ENCODE measurements at regions of chr2 and their contacts with region 1.

Region 1: GRCh38 chr2:136423516-136423996 is 305.6 kb upstream of the CXCR4 start:
- DNase-seq: peak in 1 of 2 donors; percentile 72
- H3K4me3 ChIP-seq: peak overlapping the region; percentile 45 to 60
- H3K27ac ChIP-seq: no peak overlapping the region
- H3K4me1 ChIP-seq: peaks cover 0 to 2% of the 10 kb centered on the region in 2 donors
- H3K27me3 ChIP-seq: no peaks in the 10 kb centered on the region
- CTCF ChIP-seq: peak; percentile 84 to 96 (median 86)

Region 2: DNA sequence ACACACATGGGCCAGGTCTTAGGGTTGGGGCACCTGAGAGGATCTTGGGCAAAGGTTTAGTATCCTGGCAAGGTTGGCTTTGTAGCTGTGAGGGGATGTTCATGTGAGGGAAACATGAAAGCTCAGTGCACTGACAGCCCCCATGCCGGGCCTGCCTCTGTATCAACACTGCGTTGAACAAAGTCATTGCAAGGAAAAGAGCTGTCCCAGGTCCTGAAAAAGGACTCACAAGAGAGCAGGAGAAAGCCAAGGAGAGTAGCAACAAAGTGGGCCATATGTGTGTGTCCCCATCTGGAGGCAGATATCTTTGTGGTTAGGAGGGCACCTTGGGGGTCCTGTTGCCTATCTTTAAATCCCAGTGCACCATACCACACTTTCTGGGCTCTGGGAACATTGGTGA is 104.0 kb after region 1 on chr2:
- intact Hi-C with region 1: no loop called
- DNase-seq: no peak
- H3K4me3 ChIP-seq: no peak overlapping the region
- H3K27ac ChIP-seq: no peak overlapping the region
- H3K4me1 ChIP-seq: no peaks in the 10 kb centered on the region
- H3K27me3 ChIP-seq: no peaks in the 10 kb centered on the region
- CTCF ChIP-seq: no peak

Region 3: DNA sequence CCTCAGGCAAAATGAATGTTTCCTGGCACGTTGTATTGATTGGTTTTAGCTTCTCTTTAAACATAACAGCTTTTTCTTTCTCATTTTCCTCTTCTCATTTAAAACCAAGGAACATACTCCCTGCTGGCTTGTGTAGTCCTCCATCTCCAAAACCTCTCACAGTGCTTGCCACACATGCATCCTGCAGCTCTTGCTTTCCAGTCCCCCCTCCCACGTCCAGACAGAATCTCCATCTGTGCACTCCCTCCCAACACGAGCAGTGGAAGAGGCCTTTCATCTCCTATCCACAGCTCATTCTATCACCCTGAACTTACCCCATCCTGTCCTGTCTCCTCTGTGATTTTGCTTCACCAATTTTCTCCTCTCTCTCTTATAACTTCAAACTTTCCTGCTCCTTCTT is 242.2 kb after region 1 on chr2:
- intact Hi-C with region 1: loop called (anchors 5 kb)
- DNase-seq: no peak
- H3K4me3 ChIP-seq: no peak overlapping the region
- H3K27ac ChIP-seq: no peak overlapping the region
- H3K4me1 ChIP-seq: no peaks in the 10 kb centered on the region
- H3K27me3 ChIP-seq: no peaks in the 10 kb centered on the region
- CTCF ChIP-seq: no peak

Region 4: GRCh38 chr2:136920652-136921333 is 497.2 kb after region 1 on chr2:
- intact Hi-C with region 1: loop called (anchors 1 kb)
- DNase-seq: peak in 1 of 2 donors; percentile 9
- H3K4me3 ChIP-seq: no peak overlapping the region
- H3K27ac ChIP-seq: no peak overlapping the region
- H3K4me1 ChIP-seq: peaks cover 0 to 4% of the 10 kb centered on the region in 2 donors
- H3K27me3 ChIP-seq: no peaks in the 10 kb centered on the region
- CTCF ChIP-seq: peak in 1 of 3 experiments; percentile 23

Region 5: GRCh38 chr2:137838255-137839092 is 1414.9 kb after region 1 on chr2:
- intact Hi-C with region 1: loop called (anchors 2 kb)
- DNase-seq: no peak
- H3K4me3 ChIP-seq: no peak overlapping the region
- H3K27ac ChIP-seq: no peak overlapping the region
- H3K4me1 ChIP-seq: no peaks in the 10 kb centered on the region
- H3K27me3 ChIP-seq: no peaks in the 10 kb centered on the region
- CTCF ChIP-seq: peak; percentile 32 to 71 (median 48)